Kidney (tissue), 22 donors: ENCODE measurements at regions of chr15 and their contacts with region 1.

Region 1: GRCh38 chr15:74768771-74769342 is 13.0 kb upstream of the CSK start:
- DNase-seq: peak in 4 of 5 donors; percentile 65 to 77 (median 73)
- H3K4me3 ChIP-seq: no peak overlapping the region
- H3K27ac ChIP-seq: no peak overlapping the region
- H3K4me1 ChIP-seq: peaks cover 0 to 2% (median 0%) of the 10 kb centered on the region in 3 donors
- H3K27me3 ChIP-seq: no peaks in the 10 kb centered on the region
- CTCF ChIP-seq: peak; percentile 87

Region 2: GRCh38 chr15:74635228-74635627 is 133.6 kb before region 1 on chr15:
- intact Hi-C with region 1: loop called (anchors 5 kb)
- DNase-seq: peak in 4 of 5 donors; percentile 61 to 80 (median 70)
- H3K4me3 ChIP-seq: no peak overlapping the region
- H3K27ac ChIP-seq: no peak overlapping the region
- H3K4me1 ChIP-seq: no peaks in the 10 kb centered on the region
- H3K27me3 ChIP-seq: no peaks in the 10 kb centered on the region
- CTCF ChIP-seq: peak; percentile 93

Region 3: DNA sequence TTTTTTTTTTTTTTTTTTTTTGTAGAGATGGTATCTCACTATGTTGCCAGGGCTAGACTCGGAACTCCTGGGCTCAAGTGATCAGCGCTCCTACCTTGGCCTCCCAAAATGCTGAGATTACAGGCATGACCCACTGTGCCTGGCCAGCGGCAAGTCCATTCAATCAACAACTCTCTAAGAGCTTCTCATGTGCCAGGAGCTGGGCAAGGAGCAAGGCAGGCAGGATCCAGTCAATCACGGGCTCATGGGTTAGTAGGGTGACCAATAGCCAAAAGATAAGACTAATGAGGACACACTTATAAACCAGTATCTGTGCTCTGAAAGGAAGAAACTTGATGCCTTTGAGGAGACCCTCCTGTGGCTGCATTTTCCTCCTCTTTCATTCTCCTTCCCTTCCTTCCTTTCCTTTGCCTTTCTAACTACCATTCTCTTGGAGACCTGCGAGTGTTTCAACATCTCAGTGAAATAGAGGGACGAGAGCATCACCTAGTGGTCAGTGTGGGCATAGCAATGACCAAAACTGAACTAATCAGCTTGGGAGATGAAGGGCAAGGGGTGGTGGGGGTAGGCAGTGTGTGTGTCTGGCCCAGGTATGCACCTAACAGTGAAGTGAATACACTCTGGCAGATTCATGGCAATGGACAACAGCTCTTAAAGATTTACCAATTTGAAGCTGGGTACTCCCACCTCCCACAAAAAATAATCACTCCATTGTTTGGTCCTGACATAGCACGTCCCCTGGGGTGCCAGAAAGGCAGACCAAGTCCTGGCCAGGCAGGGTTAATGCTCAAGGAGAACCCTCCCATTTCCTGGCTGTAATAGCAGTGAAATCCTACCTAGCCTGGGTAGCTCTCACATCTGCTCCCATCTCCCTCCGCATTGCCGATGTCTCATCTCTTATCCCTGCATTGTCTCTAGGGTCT is 181.5 kb after region 1 on chr15:
- intact Hi-C with region 1: loop called (anchors 5 kb)
- DNase-seq: peak; percentile 38 to 91 (median 85)
- H3K4me3 ChIP-seq: no peak overlapping the region
- H3K27ac ChIP-seq: no peak overlapping the region
- H3K4me1 ChIP-seq: peaks cover 0 to 4% (median 2%) of the 10 kb centered on the region in 3 donors
- H3K27me3 ChIP-seq: no peaks in the 10 kb centered on the region
- CTCF ChIP-seq: peak; percentile 100